PC-3 (cell line): ENCODE measurements at regions of chr21 and their contacts with region 1.

Region 1: GRCh38 chr21:43585924-43586424 is 73.3 kb downstream of the HSF2BP start:
- DNase-seq: peak; percentile 100
- ATAC-seq: peak; percentile 99
- H3K4me3 ChIP-seq: no peak overlapping the region; the same call in 1 of the 2 replicates
- H3K27ac ChIP-seq: peak overlapping the region; percentile 96
- H3K4me1 ChIP-seq: peaks cover 44% of the 10 kb centered on the region
- H3K27me3 ChIP-seq: no peaks in the 10 kb centered on the region
- CTCF ChIP-seq: no peak

Region 2: DNA sequence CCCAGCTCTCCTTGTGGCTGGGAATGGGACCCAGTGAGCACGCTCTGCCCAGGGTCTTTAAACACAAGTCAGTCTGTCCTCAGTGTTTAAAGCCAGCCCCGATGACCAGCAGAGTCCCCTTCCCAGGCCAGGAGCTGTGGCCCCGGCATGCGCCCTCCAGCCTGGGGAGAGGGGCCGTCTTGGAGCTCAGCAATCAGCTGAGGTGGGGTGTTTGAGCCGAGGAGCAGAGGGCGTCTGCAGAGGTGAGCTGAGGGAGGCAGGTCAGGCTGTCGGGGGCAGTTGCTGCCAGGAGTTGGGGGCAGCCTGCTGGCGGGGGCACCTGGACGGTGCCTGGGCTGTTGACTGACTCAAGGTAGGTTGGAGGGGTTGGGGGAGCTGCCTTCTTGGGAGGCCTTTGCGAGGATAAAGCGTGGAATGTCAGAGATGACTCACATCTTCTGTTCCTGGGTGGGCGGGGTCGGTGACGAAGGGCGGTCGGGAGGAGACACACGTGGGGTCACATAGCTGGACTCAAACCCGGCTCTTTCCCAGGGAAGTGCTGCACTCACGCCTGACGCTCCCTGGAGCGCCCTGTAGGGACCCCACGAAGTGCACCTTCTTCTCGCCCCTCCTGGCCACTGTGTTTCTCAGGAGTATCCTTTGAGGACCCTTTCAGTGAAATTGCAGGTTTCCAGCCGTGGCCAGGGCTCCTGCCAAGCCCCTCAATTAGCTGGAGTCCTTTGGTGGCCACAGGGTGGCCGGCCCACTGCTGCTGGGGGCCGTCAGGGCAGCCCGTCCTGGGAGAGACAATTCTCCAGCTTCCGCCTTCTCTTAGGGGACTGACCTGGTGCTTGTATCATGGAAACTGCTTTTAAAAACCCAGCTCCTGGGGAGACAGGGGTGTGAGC is 245.2 kb before region 1 on chr21:
- CTCF ChIA-PET with region 1: no interaction called
- POLR2A ChIA-PET with region 1: no interaction called
- intact Hi-C with region 1: no loop called
- DNase-seq: peak; percentile 85
- ATAC-seq: peak; percentile 72
- H3K4me3 ChIP-seq: no peak overlapping the region
- H3K27ac ChIP-seq: peak overlapping the region; percentile 44
- H3K4me1 ChIP-seq: peaks cover 40% of the 10 kb centered on the region
- H3K27me3 ChIP-seq: no peaks in the 10 kb centered on the region
- CTCF ChIP-seq: no peak

Region 3: DNA sequence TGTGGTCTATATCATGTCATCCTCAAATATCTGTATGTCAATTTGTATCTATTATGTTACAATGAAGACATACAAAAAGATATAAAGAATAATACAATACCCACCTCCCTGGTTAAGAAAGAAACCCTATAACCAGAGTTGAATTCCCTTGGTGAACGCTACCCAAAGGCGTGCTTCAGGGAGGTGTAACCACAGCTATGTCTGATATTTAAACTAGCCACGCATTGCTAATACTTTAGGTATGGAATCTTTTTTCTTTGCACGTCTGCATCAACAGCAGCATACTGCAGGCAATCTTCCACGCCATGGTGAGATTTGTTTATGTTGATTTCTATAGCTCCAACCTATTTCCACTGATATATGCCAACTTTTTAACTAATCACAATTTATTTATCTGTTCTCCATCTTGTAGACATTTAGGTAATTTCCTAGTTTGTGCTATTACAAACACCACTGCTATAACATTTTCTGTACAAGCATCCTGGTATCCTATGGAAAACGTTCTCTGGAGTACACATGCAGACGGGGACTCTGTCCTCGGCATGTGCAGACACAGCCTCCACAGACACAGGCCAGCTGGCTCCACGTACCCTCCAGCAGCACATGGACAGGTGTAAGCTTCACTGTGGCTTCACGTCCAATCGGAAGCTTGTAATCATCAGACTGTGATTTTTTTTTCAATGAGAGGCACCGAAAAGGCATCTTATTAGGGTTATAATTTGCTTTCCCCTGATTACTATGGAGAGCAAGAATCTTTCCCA is 14.8 kb after region 1 on chr21:
- CTCF ChIA-PET with region 1: no interaction called
- POLR2A ChIA-PET with region 1: interaction called, 3 read pairs
- intact Hi-C with region 1: loop called (anchors 1 kb)
- DNase-seq: peak; percentile 92
- ATAC-seq: peak; percentile 86
- H3K4me3 ChIP-seq: no peak overlapping the region
- H3K27ac ChIP-seq: peak overlapping the region; percentile 56
- H3K4me1 ChIP-seq: peaks cover 57% of the 10 kb centered on the region
- H3K27me3 ChIP-seq: no peaks in the 10 kb centered on the region
- CTCF ChIP-seq: no peak

Region 4: DNA sequence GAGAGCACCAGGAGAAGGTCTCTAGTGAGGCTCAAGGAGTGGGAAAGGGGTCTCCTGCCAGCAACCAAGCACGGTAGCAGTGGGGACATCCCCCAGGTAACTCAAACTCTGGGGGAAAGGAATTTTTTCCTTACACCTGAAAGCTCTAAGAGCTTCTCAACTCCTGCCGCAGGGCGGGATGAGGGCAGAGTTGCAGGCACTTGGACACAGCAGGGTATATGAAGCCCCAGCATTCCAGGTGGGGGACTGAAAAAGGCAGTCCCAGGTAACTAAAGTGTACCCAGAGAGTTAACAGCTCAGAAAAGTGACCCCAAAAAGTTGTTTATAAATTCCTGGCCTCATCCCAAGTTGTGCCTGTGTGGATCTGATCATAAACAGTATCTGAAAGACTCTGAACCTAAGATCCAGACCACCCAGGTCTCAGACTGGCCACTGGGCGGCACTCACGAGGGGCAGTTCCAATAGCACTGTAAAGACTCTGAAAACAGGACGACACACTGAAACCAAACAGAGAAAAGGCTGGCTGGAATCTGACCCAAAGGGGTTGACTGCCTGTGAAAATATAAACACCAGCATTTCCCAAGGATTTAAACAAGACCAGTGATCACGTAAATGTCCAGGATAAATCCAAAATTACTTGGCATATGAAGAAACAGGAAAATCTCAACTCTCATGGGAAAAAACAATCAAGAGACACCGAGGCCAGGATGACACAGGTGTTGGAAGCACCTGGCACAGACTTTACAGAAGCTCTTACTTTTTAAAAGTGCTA is 25.8 kb after region 1 on chr21:
- CTCF ChIA-PET with region 1: no interaction called
- POLR2A ChIA-PET with region 1: no interaction called
- intact Hi-C with region 1: loop called (anchors 1 kb)
- DNase-seq: peak; percentile 77
- ATAC-seq: peak; percentile 91
- H3K4me3 ChIP-seq: no peak overlapping the region
- H3K27ac ChIP-seq: peak overlapping the region; percentile 8
- H3K4me1 ChIP-seq: peaks cover 44% of the 10 kb centered on the region
- H3K27me3 ChIP-seq: no peaks in the 10 kb centered on the region
- CTCF ChIP-seq: peak; percentile 95